CD8-positive, alpha-beta T cell (primary cell): ENCODE measurements at regions of chr1 and their contacts with region 1.

Region 1: DNA sequence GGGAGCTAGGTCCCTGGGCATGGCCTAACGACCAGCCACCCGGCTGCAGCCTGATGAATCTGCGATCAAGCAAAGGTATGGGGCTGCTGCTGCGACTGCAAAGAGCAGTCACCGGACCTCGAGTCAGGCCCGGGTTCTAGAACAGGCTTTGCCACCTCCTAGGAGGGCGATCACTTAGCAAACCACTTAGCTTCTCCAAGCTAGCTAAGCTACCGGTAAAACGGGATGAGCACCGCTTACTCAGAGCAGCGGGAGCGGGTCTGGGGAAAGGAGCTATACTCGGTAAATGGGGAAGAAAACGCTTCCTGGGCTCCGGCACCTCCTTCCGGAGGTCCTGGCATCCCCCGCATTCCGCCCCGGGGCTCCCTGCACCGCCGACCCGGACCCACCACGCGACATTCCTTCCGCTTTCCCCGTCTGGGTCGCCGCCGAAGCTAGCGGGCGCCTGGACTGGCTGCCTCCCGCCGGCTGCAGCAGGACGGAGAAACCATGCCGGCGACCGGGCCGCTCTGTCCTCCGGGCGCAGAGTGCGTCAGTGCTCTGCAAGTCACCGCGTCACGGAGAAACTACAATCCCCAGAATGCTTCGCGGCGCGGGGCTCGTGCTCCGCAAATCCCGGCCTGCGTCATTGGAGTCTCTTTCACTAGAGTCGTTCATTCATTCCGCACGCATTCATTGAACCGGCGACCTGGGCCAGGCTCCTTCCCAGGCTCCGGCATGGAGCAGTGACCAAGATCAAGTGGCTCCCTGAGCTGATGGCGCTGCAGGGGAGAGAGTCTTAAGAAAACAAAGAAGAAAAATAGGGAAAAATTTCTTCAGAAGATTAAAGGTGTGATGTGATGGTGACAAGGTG is at the start of gene LSM10:
- DNase-seq: peak; percentile 75 to 96 (median 90)
- ATAC-seq: peak; percentile 91
- H3K4me3 ChIP-seq: peak within 1 kb of the TSS; percentile 97 to 98
- H3K4me3 Mint-ChIP-seq: peak within 1 kb of the TSS; percentile 98
- H3K27ac ChIP-seq: peak within 1 kb of the TSS; percentile 85 to 93
- H3K27ac Mint-ChIP-seq: peak within 1 kb of the TSS; percentile 96
- H3K4me1 ChIP-seq: peaks cover 11% of the 10 kb centered on the region
- H3K4me1 Mint-ChIP-seq: peaks cover 31% of the 10 kb centered on the region
- H3K27me3 ChIP-seq: no peaks in the 10 kb centered on the region
- H3K27me3 Mint-ChIP-seq: no peaks in the 10 kb centered on the region
- CTCF ChIP-seq: no peak
- total RNA-seq, gene LSM10: 20.9 to 21.4 TPM

Region 2: GRCh38 chr1:35797380-35797779 is 600.2 kb before region 1 on chr1:
- CTCF ChIA-PET with region 1: no interaction called
- POLR2A ChIA-PET with region 1: no interaction called
- intact Hi-C with region 1: no loop called
- DNase-seq: no peak
- ATAC-seq: no peak
- H3K4me3 ChIP-seq: no peak overlapping the region
- H3K4me3 Mint-ChIP-seq: no peak overlapping the region
- H3K27ac ChIP-seq: no peak overlapping the region
- H3K27ac Mint-ChIP-seq: no peak overlapping the region
- H3K4me1 ChIP-seq: no peaks in the 10 kb centered on the region
- H3K4me1 Mint-ChIP-seq: no peaks in the 10 kb centered on the region
- H3K27me3 ChIP-seq: no peaks in the 10 kb centered on the region
- H3K27me3 Mint-ChIP-seq: no peaks in the 10 kb centered on the region
- CTCF ChIP-seq: no peak

Region 3: GRCh38 chr1:35882945-35883634 is 514.5 kb before region 1 on chr1 and contains the start of gene AGO1:
- CTCF ChIA-PET with region 1: no interaction called
- POLR2A ChIA-PET with region 1: no interaction called
- intact Hi-C with region 1: loop called in 1 of 2 experiments (anchors 1 kb)
- DNase-seq: peak; percentile 94 to 99 (median 97)
- ATAC-seq: peak; percentile 99
- H3K4me3 ChIP-seq: peak within 1 kb of the TSS; percentile 99 to 100
- H3K4me3 Mint-ChIP-seq: peak within 1 kb of the TSS; percentile 92
- H3K27ac ChIP-seq: peak within 1 kb of the TSS; percentile 59 to 68
- H3K27ac Mint-ChIP-seq: peak within 1 kb of the TSS; percentile 69
- H3K4me1 ChIP-seq: peaks cover 23% of the 10 kb centered on the region
- H3K4me1 Mint-ChIP-seq: peaks cover 52% of the 10 kb centered on the region
- H3K27me3 ChIP-seq: peaks cover 0 to 3% of the 10 kb centered on the region in 2 experiments
- H3K27me3 Mint-ChIP-seq: peaks cover 3% of the 10 kb centered on the region
- CTCF ChIP-seq: peak; percentile 77
- total RNA-seq, gene AGO1: 15.8 TPM

Region 4: DNA sequence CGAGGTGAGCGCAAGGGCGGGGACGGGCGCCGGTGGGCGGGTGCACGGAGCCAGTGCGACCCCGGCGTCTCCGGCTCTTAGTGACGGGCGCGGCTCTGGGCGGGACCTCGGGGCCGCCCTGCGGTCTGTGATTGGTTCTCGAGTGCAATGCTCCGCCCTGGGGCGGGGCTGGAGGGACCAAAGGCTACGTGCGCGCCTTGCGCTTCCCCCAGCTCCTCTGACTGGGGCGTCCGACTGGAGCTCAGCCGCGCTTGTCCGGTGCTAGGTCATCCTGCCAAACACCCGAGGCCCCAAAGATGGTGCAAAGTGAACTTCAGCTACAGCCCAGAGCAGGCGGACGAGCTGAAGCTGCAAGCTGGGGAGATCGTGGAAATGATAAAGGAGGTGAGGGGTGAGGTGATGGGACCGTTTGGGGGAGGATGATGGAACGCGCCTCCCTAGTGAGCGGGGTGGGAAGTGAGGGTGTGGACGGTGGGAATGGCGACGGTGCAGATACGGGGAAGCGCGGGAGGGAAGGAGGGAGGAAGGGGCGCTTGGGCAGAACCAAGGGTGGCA is 90.6 kb before region 1 on chr1:
- CTCF ChIA-PET with region 1: no interaction called
- POLR2A ChIA-PET with region 1: interaction called, 3 read pairs
- intact Hi-C with region 1: loop called in 1 of 2 experiments (anchors 5 kb)
- DNase-seq: peak; percentile 84 to 96 (median 93)
- ATAC-seq: peak; percentile 98
- H3K4me3 ChIP-seq: peak overlapping the region; percentile 58 to 63
- H3K4me3 Mint-ChIP-seq: peak overlapping the region; percentile 96
- H3K27ac ChIP-seq: peak overlapping the region; percentile 63
- H3K27ac Mint-ChIP-seq: peak overlapping the region; percentile 94
- H3K4me1 ChIP-seq: peaks cover 13% of the 10 kb centered on the region
- H3K4me1 Mint-ChIP-seq: peaks cover 7% of the 10 kb centered on the region
- H3K27me3 ChIP-seq: no peaks in the 10 kb centered on the region
- H3K27me3 Mint-ChIP-seq: no peaks in the 10 kb centered on the region
- CTCF ChIP-seq: no peak

Region 5: GRCh38 chr1:36369061-36369861 is 28.3 kb before region 1 on chr1:
- CTCF ChIA-PET with region 1: interaction called, 15 read pairs
- POLR2A ChIA-PET with region 1: interaction called, 11 read pairs
- intact Hi-C with region 1: loop called in 1 of 2 experiments (anchors 1 kb)
- DNase-seq: peak; percentile 75 to 91 (median 85)
- ATAC-seq: peak; percentile 62
- H3K4me3 ChIP-seq: no peak overlapping the region
- H3K4me3 Mint-ChIP-seq: no peak overlapping the region
- H3K27ac ChIP-seq: peak overlapping the region in 1 of 2 experiments; percentile 25
- H3K27ac Mint-ChIP-seq: peak overlapping the region; percentile 79
- H3K4me1 ChIP-seq: peaks cover 55% of the 10 kb centered on the region
- H3K4me1 Mint-ChIP-seq: peaks cover 68% of the 10 kb centered on the region
- H3K27me3 ChIP-seq: no peaks in the 10 kb centered on the region
- H3K27me3 Mint-ChIP-seq: no peaks in the 10 kb centered on the region
- CTCF ChIP-seq: peak; percentile 88

Region 6: DNA sequence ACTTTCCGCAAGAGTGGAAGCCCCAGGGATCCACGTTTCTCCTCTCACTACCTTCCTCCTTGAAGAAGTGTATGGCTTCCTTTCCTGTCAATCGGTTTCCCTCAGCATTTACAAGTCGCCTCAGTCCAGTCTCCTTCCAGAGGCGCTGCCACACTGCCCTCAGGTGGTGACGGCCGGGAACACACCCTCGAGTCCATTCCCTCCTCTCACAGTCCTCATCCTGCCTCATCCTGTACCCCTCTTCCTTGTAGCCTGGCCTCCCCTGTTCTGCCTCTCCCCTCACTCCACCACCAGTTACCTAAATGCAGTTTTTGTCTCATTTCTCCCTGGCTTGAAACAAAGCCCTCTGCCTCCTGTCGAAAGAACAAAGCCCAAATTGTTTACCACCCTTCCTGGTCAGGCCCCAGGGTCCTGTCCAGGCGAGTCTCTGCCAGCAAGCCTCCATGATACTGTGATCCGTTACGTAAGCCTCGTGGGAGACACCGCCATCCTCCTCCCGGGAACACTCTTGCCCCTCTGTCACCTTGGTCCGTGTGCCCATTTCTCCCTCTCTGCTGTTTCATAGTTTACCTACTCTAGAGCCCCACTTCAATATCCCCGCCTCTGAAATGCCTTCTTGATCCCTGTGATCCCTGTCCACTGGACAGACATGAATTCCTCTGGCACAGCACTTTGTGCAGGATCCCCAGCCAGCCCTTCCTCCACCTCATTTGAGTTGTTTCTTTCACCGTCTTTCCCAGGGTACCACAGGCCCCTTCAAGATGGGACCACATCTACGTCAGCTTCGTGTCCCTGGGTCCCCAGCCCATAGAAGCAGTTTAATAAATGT is 23.4 kb after region 1 on chr1:
- CTCF ChIA-PET with region 1: interaction called, 6 read pairs
- POLR2A ChIA-PET with region 1: no interaction called
- intact Hi-C with region 1: loop called in 1 of 2 experiments (anchors 2 kb)
- DNase-seq: peak; percentile 82 to 96 (median 89)
- ATAC-seq: peak; percentile 100
- H3K4me3 ChIP-seq: peak overlapping the region in 1 of 2 experiments; percentile 7
- H3K4me3 Mint-ChIP-seq: peak overlapping the region; percentile 64
- H3K27ac ChIP-seq: peak overlapping the region in 1 of 2 experiments; percentile 60
- H3K27ac Mint-ChIP-seq: peak overlapping the region; percentile 88
- H3K4me1 ChIP-seq: peaks cover 18% of the 10 kb centered on the region
- H3K4me1 Mint-ChIP-seq: peaks cover 23% of the 10 kb centered on the region
- H3K27me3 ChIP-seq: no peaks in the 10 kb centered on the region
- H3K27me3 Mint-ChIP-seq: no peaks in the 10 kb centered on the region
- CTCF ChIP-seq: peak; percentile 87

Region 7: GRCh38 chr1:36956570-36956969 is 559.0 kb after region 1 on chr1:
- CTCF ChIA-PET with region 1: no interaction called
- POLR2A ChIA-PET with region 1: no interaction called
- intact Hi-C with region 1: no loop called
- DNase-seq: no peak
- ATAC-seq: no peak
- H3K4me3 ChIP-seq: no peak overlapping the region
- H3K4me3 Mint-ChIP-seq: no peak overlapping the region
- H3K27ac ChIP-seq: no peak overlapping the region
- H3K27ac Mint-ChIP-seq: no peak overlapping the region
- H3K4me1 ChIP-seq: no peaks in the 10 kb centered on the region
- H3K4me1 Mint-ChIP-seq: no peaks in the 10 kb centered on the region
- H3K27me3 ChIP-seq: peaks cover 0 to 2% of the 10 kb centered on the region in 2 experiments
- H3K27me3 Mint-ChIP-seq: peaks cover 4% of the 10 kb centered on the region
- CTCF ChIP-seq: no peak